Heart left ventricle (tissue), 16 donors: ENCODE measurements at regions of chr6 and their contacts with region 1.

Region 1: DNA sequence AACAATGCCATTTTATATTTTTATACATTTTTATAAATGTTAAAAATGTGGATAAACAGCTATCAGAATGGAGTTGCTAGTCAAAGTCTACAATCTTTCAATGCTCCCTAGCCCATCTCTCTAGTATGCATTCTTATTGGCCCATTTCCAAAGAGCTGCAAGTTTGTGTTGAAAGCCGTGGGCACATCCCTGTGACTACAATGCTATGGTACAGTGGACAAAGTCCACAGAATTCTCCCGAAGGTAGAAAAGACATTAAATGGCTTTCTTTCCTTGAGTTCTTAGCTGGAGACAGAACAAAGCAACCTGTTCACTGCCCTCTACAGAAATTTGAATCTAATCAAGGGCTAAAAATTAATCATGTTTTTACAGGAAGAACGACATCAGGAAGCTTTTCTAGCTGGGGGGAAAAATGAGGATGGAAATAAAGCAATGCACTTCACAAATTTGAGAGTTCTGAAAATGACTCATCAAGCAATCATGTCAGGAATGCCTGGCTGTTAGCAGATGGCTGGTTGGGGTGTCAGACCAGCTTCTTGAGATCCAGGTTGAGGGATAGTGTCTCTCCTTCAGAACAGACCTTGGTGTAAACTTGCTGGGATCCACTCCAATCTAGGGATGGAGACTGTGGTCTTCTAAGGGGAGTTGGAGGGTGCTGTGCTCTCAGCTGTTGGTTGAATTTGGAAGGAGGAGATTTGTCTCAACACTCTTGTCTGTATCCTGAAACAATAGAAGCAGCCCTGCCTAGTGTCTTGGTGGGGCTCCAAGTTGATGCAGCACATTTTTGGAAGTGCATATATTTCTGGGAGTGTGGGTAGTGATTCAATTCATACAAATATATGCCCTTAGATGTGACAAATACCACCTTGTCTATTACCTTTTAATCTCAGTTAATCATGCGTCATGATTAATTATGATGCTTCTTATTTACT is 143.4 kb upstream of the PHACTR1 start:
- DNase-seq: no peak
- ATAC-seq: peak in 1 of 4 donors; percentile 43
- H3K4me3 ChIP-seq: no peak overlapping the region
- H3K27ac ChIP-seq: peak overlapping the region in 6 of 12 donors; percentile 7 to 47 (median 17)
- H3K4me1 ChIP-seq: peaks cover 0 to 21% (median 8%) of the 10 kb centered on the region in 12 donors
- H3K27me3 ChIP-seq: no peaks in the 10 kb centered on the region
- CTCF ChIP-seq: no peak
- POLR2A ChIP-seq: no peak

Region 2: DNA sequence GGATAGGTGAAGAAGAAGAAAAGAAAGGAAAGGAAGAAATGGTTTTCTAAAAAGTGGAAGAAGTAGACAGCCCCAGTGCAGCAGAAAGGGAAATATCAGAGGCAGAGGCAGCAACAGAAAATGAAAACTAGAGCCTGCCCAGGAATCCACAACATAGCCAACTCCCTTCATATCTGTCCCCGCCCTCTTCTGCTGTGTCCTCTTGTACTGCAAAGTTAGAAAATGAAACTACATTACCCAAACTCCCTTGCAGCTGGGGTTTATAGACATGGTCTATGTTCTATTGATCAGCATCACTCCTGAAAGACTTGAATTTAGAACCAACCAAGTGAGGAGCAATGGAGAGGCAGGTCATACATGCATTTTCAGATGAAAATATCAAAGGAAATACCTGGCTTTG is 57.1 kb before region 1 on chr6:
- intact Hi-C with region 1: loop called in 1 of 10 experiments (anchors 10 kb)
- DNase-seq: peak in 1 of 5 donors; percentile 31
- ATAC-seq: peak in 3 of 4 donors; percentile 59 to 65 (median 64)
- H3K4me3 ChIP-seq: peak overlapping the region in 3 of 12 donors; percentile 13 to 34 (median 29)
- H3K27ac ChIP-seq: no peak overlapping the region
- H3K4me1 ChIP-seq: peaks cover 0 to 4% (median 0%) of the 10 kb centered on the region in 12 donors
- H3K27me3 ChIP-seq: no peaks in the 10 kb centered on the region
- CTCF ChIP-seq: no peak
- POLR2A ChIP-seq: no peak